Activated CD4-positive, alpha-beta memory T cell treated with anti-CD3 and anti-CD28 coated beads for 36 hours (primary cell): ENCODE measurements at regions of chr17 and their contacts with region 1.

Region 1: GRCh38 chr17:13594762-13595598 is 6.7 kb downstream of the HS3ST3A1 start:
- DNase-seq: peak; percentile 84
- H3K4me3 Mint-ChIP-seq: no peak overlapping the region
- H3K27ac Mint-ChIP-seq: no peak overlapping the region
- H3K4me1 Mint-ChIP-seq: peaks cover 3% of the 10 kb centered on the region
- H3K27me3 Mint-ChIP-seq: peaks cover 19% of the 10 kb centered on the region

Region 2: DNA sequence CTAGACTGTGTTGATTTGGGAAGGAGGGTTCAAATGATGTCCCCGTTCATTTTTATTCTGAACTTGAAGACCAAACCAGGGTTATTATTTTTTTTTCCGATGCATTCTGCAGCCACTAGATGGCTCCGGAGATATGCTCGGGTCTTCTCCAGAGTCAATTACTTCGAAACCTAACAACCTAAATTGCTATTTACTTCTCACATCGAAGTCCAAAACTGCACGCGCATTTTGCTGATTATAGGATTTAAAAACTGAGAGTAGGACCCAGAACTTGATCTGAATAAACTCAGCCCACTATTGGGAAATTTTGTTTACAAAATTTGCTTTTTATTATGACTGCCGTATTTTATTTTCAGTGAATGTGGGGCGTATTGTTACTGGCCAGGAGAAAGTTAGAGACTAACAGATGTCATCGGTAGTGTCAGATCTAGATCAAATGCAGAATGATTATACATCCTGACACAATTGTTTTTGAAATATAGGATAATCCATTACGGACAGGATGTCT is 257.1 kb before region 1 on chr17:
- CTCF ChIA-PET with region 1: no interaction called
- POLR2A ChIA-PET with region 1: no interaction called
- intact Hi-C with region 1: loop called (anchors 2 kb)
- DNase-seq: peak; percentile 14
- H3K4me3 Mint-ChIP-seq: no peak overlapping the region
- H3K27ac Mint-ChIP-seq: no peak overlapping the region
- H3K4me1 Mint-ChIP-seq: peaks cover 4% of the 10 kb centered on the region
- H3K27me3 Mint-ChIP-seq: peaks cover 33% of the 10 kb centered on the region

Region 3: DNA sequence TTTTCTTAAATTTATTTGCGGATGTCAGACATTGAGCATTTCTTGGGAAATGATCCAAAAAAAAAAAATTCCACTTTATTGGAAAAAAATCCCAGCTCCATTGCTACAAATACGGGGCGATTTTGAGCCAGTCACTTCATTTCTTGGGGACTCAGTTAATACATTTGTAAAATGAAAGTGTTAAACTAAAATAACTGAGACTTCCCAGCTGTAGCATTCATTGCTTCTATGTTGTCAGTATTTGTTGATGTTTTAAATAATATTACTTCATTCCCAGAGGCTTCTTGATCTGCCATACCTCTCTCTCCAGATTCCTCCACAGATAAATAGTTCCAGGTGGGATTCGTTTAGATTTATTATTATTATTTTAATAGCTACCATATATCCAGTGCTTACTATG is 83.9 kb after region 1 on chr17:
- CTCF ChIA-PET with region 1: no interaction called
- POLR2A ChIA-PET with region 1: no interaction called
- intact Hi-C with region 1: no loop called
- DNase-seq: no peak
- H3K4me3 Mint-ChIP-seq: no peak overlapping the region
- H3K27ac Mint-ChIP-seq: no peak overlapping the region
- H3K4me1 Mint-ChIP-seq: no peaks in the 10 kb centered on the region
- H3K27me3 Mint-ChIP-seq: peaks cover 10% of the 10 kb centered on the region

Region 4: GRCh38 chr17:14203388-14203787 is 608.4 kb after region 1 on chr17:
- CTCF ChIA-PET with region 1: interaction called, 3 read pairs
- POLR2A ChIA-PET with region 1: no interaction called
- intact Hi-C with region 1: loop called (anchors 5 kb)
- DNase-seq: peak; percentile 60
- H3K4me3 Mint-ChIP-seq: no peak overlapping the region
- H3K27ac Mint-ChIP-seq: peak overlapping the region; percentile 77
- H3K4me1 Mint-ChIP-seq: peaks cover 85% of the 10 kb centered on the region
- H3K27me3 Mint-ChIP-seq: no peaks in the 10 kb centered on the region

Region 5: GRCh38 chr17:14784997-14785696 is 1190.2 kb after region 1 on chr17:
- CTCF ChIA-PET with region 1: interaction called, 5 read pairs
- POLR2A ChIA-PET with region 1: no interaction called
- intact Hi-C with region 1: loop called (anchors 10 kb)
- DNase-seq: peak; percentile 28
- H3K4me3 Mint-ChIP-seq: no peak overlapping the region
- H3K27ac Mint-ChIP-seq: no peak overlapping the region
- H3K4me1 Mint-ChIP-seq: no peaks in the 10 kb centered on the region
- H3K27me3 Mint-ChIP-seq: peaks cover 10% of the 10 kb centered on the region

Region 6: DNA sequence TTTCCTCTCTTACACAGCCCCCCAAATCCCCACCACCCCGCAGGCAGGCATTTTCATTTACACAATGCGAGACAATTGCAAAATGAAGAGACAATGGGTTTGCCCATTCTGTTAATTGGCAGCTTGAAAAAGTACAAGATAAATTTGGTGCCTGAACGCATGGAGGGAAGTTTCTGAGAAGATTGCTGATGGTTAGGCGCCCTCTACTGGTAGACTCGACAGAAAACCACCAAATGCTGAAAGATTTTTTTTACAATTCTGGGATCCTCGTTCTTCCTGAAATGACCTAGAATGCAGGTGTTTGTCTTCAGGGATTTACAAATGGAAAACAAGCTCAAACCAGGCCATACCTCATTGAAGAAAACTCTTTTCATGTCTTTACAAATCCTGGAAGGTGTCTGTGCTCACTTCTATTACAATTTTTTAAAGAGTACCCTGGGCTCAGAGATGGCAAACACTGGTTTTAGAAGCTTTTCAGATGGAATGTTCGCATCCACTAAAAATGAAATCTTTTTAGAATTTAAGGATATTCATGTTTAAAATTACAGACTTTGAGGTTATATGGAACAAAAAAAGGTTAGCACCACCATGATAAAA is 1331.6 kb after region 1 on chr17:
- CTCF ChIA-PET with region 1: interaction called, 52 read pairs
- POLR2A ChIA-PET with region 1: no interaction called
- intact Hi-C with region 1: loop called (anchors 1 kb)
- DNase-seq: peak; percentile 57
- H3K4me3 Mint-ChIP-seq: no peak overlapping the region
- H3K27ac Mint-ChIP-seq: no peak overlapping the region
- H3K4me1 Mint-ChIP-seq: no peaks in the 10 kb centered on the region
- H3K27me3 Mint-ChIP-seq: peaks cover 4% of the 10 kb centered on the region